PC-9 (cell line): ENCODE measurements at regions of chr12 and their contacts with region 1.

Region 1: GRCh38 chr12:6752921-6753771 is at the start of gene MLF2:
- DNase-seq: peak; percentile 95 to 100
- H3K4me3 ChIP-seq: peak within 1 kb of the TSS; percentile 77
- H3K27ac ChIP-seq: peak within 1 kb of the TSS; percentile 83
- H3K4me1 ChIP-seq: peaks cover 16% of the 10 kb centered on the region
- H3K27me3 ChIP-seq: no peaks in the 10 kb centered on the region
- CTCF ChIP-seq: no peak; the same call in 1 of the 2 replicates
- total RNA-seq, gene MLF2: 349 and 379 TPM in 2 replicates

Region 2: DNA sequence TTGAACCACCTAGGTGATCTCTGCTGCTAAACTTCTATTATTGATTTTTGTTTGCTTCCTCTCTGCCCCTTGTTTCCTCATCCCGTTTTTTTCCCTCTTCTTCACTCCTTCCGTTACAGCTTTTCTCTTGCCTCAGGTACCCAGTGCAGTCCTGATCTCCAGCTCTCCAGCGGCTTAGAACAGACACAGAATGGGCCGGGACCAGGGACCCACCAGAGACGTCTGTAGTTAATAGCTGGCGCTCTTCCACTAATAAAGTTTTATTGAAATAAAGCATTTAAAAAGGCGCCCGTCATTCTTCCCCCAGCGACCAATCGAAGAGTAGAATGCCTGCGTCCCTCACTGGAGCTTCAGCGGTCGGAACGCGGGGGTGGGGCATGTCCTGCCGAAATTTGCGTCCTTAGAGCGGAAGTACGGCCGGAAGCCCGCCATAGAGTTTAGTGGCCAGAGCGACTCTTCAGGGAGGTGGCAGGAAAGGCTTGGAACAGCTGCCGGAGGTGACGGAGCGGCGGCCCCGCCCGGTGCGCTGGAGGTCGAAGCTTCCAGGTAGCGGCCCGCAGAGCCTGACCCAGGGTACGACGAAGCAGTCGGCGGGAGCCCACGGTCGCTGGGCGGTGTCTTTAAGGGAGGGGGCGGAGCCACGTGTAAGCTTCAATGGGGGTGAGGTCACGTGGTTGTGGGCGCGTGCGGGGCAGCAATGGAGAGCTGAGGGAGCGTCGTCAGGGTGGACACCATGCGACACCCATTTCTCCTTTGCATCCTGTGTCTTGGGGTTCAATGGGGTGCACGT is 29.3 kb before region 1 on chr12 and contains the start of gene COPS7A:
- CTCF ChIA-PET with region 1: interaction called, 18 read pairs
- POLR2A ChIA-PET with region 1: interaction called, 11 read pairs
- intact Hi-C with region 1: loop called (anchors 1 kb)
- DNase-seq: peak; percentile 98 to 100
- H3K4me3 ChIP-seq: peak within 1 kb of the TSS; percentile 77
- H3K27ac ChIP-seq: peak within 1 kb of the TSS; percentile 60
- H3K4me1 ChIP-seq: peaks cover 19% of the 10 kb centered on the region
- H3K27me3 ChIP-seq: no peaks in the 10 kb centered on the region
- CTCF ChIP-seq: no peak
- total RNA-seq, gene COPS7A: 88.7 and 116 TPM in 2 replicates

Region 3: DNA sequence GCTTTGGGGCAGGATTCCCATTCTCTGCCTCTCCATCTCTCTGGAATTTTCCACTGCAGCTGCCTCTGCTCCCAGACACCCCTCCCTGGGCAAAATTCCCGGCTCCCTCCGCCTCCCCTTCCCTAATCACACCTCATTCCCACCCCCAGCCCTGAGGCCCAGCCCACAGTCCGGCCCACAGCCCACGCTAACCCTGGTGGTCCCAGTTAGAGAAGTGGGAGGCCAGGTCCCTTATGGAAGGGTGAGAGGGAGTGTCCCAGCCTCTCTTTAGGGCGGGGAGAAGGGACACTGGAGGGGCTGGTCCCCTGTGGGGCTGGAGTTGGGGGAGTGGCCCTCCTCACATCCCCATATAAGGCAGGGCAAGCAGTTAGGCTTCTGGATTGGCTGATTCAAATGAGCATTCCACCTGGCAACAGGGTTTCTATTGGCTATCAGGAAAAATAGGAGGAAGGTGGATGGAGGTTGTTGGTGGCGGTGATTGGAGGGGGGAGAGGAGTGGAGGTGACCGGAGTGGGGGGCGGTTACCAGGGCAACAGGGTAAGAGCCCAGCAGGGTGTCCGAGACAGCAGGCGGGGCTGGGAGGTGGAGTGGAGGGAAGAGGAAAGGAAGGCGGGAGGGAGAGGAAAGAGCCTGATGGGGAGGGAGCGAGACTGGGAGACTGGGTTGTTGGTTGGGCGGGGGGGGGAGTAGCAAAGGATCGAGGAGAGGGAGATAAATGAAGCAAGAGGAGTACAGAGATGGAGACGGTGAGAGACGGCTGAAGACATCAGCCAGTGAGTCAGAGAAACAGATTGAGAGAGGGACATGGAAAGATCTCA is 11.1 kb after region 1 on chr12:
- CTCF ChIA-PET with region 1: interaction called, 83 read pairs
- POLR2A ChIA-PET with region 1: interaction called, 59 read pairs
- intact Hi-C with region 1: loop called (anchors 1 kb)
- DNase-seq: peak; percentile 97 to 98
- H3K4me3 ChIP-seq: peak overlapping the region; percentile 21; the same call in 1 of the 2 replicates
- H3K27ac ChIP-seq: no peak overlapping the region; the same call in 1 of the 2 replicates
- H3K4me1 ChIP-seq: peaks cover 36% of the 10 kb centered on the region
- H3K27me3 ChIP-seq: no peaks in the 10 kb centered on the region
- CTCF ChIP-seq: no peak

Region 4: GRCh38 chr12:6825398-6826124 is 72.4 kb after region 1 on chr12:
- CTCF ChIA-PET with region 1: interaction called, 9 read pairs
- POLR2A ChIA-PET with region 1: no interaction called
- intact Hi-C with region 1: loop called (anchors 1 kb)
- DNase-seq: peak; percentile 68 to 93
- H3K4me3 ChIP-seq: no peak overlapping the region
- H3K27ac ChIP-seq: no peak overlapping the region
- H3K4me1 ChIP-seq: no peaks in the 10 kb centered on the region; the same call in 1 of the 2 replicates
- H3K27me3 ChIP-seq: peaks cover 97% of the 10 kb centered on the region
- CTCF ChIP-seq: peak; percentile 96

Region 5: GRCh38 chr12:6851921-6852650 is 98.9 kb after region 1 on chr12 and contains the start of gene USP5:
- CTCF ChIA-PET with region 1: interaction called, 10 read pairs
- POLR2A ChIA-PET with region 1: interaction called, 14 read pairs
- intact Hi-C with region 1: loop called (anchors 1 kb)
- DNase-seq: peak; percentile 99 to 100
- H3K4me3 ChIP-seq: peak within 1 kb of the TSS; percentile 83
- H3K27ac ChIP-seq: peak within 1 kb of the TSS; percentile 69
- H3K4me1 ChIP-seq: peaks cover 25% of the 10 kb centered on the region
- H3K27me3 ChIP-seq: no peaks in the 10 kb centered on the region
- CTCF ChIP-seq: no peak
- total RNA-seq, gene USP5: 267 and 308 TPM in 2 replicates

Region 6: GRCh38 chr12:6996040-6996441 is 242.9 kb after region 1 on chr12:
- CTCF ChIA-PET with region 1: no interaction called
- POLR2A ChIA-PET with region 1: no interaction called
- intact Hi-C with region 1: no loop called
- DNase-seq: peak; percentile 62 to 64
- H3K4me3 ChIP-seq: no peak overlapping the region
- H3K27ac ChIP-seq: no peak overlapping the region
- H3K4me1 ChIP-seq: peaks cover 32% of the 10 kb centered on the region
- H3K27me3 ChIP-seq: no peaks in the 10 kb centered on the region
- CTCF ChIP-seq: no peak